Panc1 (cell line): ENCODE measurements at regions of chr10 and their contacts with region 1.

Region 1: GRCh38 chr10:91698258-91698657 is 65.4 kb upstream of the PPP1R3C start:
- DNase-seq: no peak
- ATAC-seq: no peak
- H3K4me3 ChIP-seq: no peak overlapping the region
- H3K27ac ChIP-seq: no peak overlapping the region
- H3K4me1 ChIP-seq: no peaks in the 10 kb centered on the region
- H3K27me3 ChIP-seq: no peaks in the 10 kb centered on the region; the same call in 1 of the 2 replicates
- CTCF ChIP-seq: no peak

Region 2: DNA sequence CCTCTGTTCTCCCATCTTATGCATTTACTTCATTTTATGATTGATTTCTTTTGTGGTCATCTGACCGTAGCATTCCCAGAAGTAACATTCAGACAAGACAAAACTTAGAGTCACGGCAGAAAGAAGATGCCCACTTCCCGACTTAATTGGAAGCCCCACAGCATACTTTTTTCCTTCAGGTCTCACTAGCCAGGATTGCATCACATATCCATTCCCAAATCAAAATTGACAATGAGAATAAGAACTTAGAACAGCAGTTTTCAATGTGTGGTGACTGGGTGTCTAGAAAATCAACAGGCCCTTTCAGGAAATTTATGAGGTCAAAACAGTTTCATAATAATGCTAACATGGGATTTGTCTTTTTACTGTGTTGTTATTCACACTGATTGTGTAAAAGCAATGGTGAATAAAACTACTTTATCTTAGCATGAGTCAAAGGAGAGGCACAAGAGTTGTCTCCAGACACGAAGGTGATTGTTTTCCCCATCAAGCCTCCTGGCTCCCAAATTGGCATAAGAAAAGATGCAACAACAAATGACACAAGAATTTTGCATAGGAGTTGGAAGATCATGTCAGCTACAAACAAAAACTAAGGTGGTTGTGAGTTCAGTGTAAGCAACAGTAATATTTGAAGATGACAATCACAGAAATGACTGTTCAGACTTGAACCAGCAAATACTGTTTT is 1334.3 kb before region 1 on chr10:
- CTCF ChIA-PET with region 1: no interaction called
- POLR2A ChIA-PET with region 1: no interaction called
- in situ Hi-C with region 1: no loop called
- intact Hi-C with region 1: no loop called
- DNase-seq: no peak
- ATAC-seq: no peak
- H3K4me3 ChIP-seq: no peak overlapping the region
- H3K27ac ChIP-seq: no peak overlapping the region
- H3K4me1 ChIP-seq: no peaks in the 10 kb centered on the region
- H3K27me3 ChIP-seq: no peaks in the 10 kb centered on the region
- CTCF ChIP-seq: no peak

Region 3: DNA sequence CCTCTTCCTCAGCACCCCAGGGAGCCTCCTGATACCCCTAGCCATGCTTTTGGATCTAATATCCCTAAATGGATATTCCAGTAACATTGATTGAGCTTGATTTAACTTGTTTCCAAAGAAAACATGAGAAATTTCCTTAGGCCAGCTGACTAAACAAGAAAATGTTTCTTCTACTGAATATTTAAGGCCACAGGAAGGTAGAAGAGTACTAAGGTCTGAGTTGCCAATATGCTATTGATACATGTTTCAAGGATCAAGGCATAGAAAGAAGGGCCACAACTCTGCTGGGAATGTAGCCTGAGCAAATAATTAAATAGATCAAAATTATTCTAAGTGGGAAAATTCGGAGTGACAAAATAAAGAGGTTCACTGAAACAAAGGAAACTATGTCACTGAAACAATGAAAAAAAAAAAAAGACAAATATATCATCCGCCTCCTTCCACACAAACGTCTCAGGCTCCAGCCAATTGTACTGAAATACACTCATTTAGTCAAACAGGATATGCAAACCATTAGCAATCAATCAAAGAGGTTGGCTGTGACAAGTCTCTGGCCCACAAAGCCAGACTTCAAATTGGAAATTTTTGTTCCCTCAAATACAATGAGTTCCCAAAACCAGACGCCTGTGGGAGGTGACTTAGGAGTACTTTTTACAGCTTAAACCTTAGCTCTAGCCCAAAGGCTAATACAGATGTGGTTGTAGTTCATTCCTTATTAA is 1236.7 kb before region 1 on chr10:
- CTCF ChIA-PET with region 1: no interaction called
- POLR2A ChIA-PET with region 1: no interaction called
- in situ Hi-C with region 1: no loop called
- intact Hi-C with region 1: no loop called
- DNase-seq: no peak
- ATAC-seq: no peak
- H3K4me3 ChIP-seq: no peak overlapping the region
- H3K27ac ChIP-seq: no peak overlapping the region
- H3K4me1 ChIP-seq: no peaks in the 10 kb centered on the region
- H3K27me3 ChIP-seq: no peaks in the 10 kb centered on the region
- CTCF ChIP-seq: no peak

Region 4: GRCh38 chr10:91613411-91614253 is 84.6 kb before region 1 on chr10:
- CTCF ChIA-PET with region 1: no interaction called
- POLR2A ChIA-PET with region 1: interaction called, 12 read pairs
- in situ Hi-C with region 1: no loop called
- intact Hi-C with region 1: no loop called
- DNase-seq: no peak
- ATAC-seq: peak; percentile 84
- H3K4me3 ChIP-seq: no peak overlapping the region
- H3K27ac ChIP-seq: no peak overlapping the region
- H3K4me1 ChIP-seq: no peaks in the 10 kb centered on the region
- H3K27me3 ChIP-seq: no peaks in the 10 kb centered on the region
- CTCF ChIP-seq: no peak

Region 5: GRCh38 chr10:93485690-93486089 is 1787.4 kb after region 1 on chr10:
- CTCF ChIA-PET with region 1: no interaction called
- POLR2A ChIA-PET with region 1: no interaction called
- in situ Hi-C with region 1: no loop called
- intact Hi-C with region 1: no loop called
- DNase-seq: no peak
- ATAC-seq: no peak
- H3K4me3 ChIP-seq: no peak overlapping the region
- H3K27ac ChIP-seq: no peak overlapping the region
- H3K4me1 ChIP-seq: peaks cover 6% of the 10 kb centered on the region
- H3K27me3 ChIP-seq: no peaks in the 10 kb centered on the region
- CTCF ChIP-seq: peak; percentile 71